Posterior cingulate gyrus (tissue), 11 donors: ENCODE measurements at regions of chr17 and their contacts with region 1.

Region 1: GRCh38 chr17:35011671-35012210 is 31.4 kb downstream of the LIG3 start:
- DNase-seq: no peak

Region 2: DNA sequence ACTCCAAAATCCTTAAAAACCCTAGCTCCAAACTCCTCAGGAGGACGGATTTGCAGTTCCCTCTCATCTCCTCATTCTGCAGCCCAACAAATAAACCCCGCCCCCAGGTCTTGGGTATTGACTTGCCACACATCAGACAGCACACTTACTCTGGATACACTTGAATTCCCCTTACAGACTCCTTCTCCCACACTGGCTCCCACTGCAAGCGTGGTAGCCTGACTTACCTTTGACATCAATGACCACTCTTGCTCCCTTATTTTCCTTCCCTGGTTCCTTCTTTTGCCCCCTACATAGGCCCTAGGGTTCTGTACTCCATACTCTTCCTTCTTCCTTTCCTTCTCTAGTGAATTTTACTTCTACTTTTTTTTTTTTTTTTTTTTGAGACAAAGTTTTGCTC is 44.3 kb after region 1 on chr17:
- intact Hi-C with region 1: loop called (anchors 2 kb)
- DNase-seq: no peak

Region 3: DNA sequence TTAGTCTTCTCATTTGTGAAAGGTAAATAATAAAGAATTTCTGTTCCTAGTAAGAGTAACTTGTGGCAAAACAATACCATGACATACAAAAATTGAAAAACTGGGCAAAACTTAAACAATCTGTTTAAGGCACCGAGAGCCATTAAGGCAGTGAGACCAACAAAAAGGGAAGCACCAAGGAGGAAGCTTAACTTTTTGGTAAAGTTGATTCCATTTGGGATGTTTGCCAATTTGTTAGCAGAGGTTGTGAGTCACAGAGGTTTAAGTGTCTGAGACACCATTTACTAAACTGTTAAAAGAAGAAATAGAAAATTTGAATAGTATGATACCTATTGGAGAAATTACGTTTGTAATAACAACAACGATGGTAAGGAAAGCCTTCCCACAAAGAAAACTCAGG is 177.6 kb after region 1 on chr17:
- intact Hi-C with region 1: no loop called
- DNase-seq: no peak